Heart right ventricle (tissue), 16 donors: ENCODE measurements at regions of chr11 and their contacts with region 1.

Region 1: GRCh38 chr11:128336203-128336602 is 251.2 kb downstream of the ETS1 start:
- DNase-seq: peak; percentile 61 to 67
- ATAC-seq: peak; percentile 24 to 83 (median 68)
- H3K4me3 ChIP-seq: no peak overlapping the region
- H3K27ac ChIP-seq: peak overlapping the region in 7 of 10 donors; percentile 49 to 91 (median 66)
- H3K4me1 ChIP-seq: peaks cover 0 to 62% (median 40%) of the 10 kb centered on the region in 9 donors
- H3K27me3 ChIP-seq: no peaks in the 10 kb centered on the region
- CTCF ChIP-seq: peak in 1 of 9 donors; percentile 10

Region 2: GRCh38 chr11:128299132-128299726 is 37.0 kb before region 1 on chr11:
- intact Hi-C with region 1: loop called in 3 of 10 experiments (anchors 5 kb)
- DNase-seq: no peak
- ATAC-seq: peak in 7 of 8 donors; percentile 19 to 52 (median 34)
- H3K4me3 ChIP-seq: no peak overlapping the region
- H3K27ac ChIP-seq: peak overlapping the region in 9 of 10 donors; percentile 22 to 81 (median 65)
- H3K4me1 ChIP-seq: peaks cover 4 to 70% (median 44%) of the 10 kb centered on the region in 9 donors
- H3K27me3 ChIP-seq: no peaks in the 10 kb centered on the region
- CTCF ChIP-seq: no peak

Region 3: GRCh38 chr11:128412847-128413791 is 76.9 kb after region 1 on chr11:
- intact Hi-C with region 1: loop called in 2 of 10 experiments (anchors 2 to 5 kb)
- DNase-seq: no peak
- ATAC-seq: no peak
- H3K4me3 ChIP-seq: no peak overlapping the region
- H3K27ac ChIP-seq: peak overlapping the region in 3 of 10 donors; percentile 35 to 62 (median 51)
- H3K4me1 ChIP-seq: peaks cover 0 to 67% (median 25%) of the 10 kb centered on the region in 9 donors
- H3K27me3 ChIP-seq: no peaks in the 10 kb centered on the region
- CTCF ChIP-seq: no peak